CD4-positive, alpha-beta memory T cell (primary cell): ENCODE measurements at regions of chr10 and their contacts with region 1.

Region 1: GRCh38 chr10:133357285-133358151 is at the start of gene FUOM:
- DNase-seq: peak; percentile 76 to 79 (median 77)
- H3K4me3 ChIP-seq: peak within 1 kb of the TSS in 1 of 2 donors; percentile 63
- H3K4me3 Mint-ChIP-seq: peak within 1 kb of the TSS; percentile 67 to 82 (median 78)
- H3K27ac ChIP-seq: peak within 1 kb of the TSS; percentile 52
- H3K27ac Mint-ChIP-seq: peak within 1 kb of the TSS in 4 of 7 donors; percentile 43 to 62 (median 56)
- H3K4me1 ChIP-seq: peaks cover 8% of the 10 kb centered on the region
- H3K4me1 Mint-ChIP-seq: peaks cover 0 to 9% (median 5%) of the 10 kb centered on the region in 4 donors
- H3K27me3 ChIP-seq: no peaks in the 10 kb centered on the region
- H3K27me3 Mint-ChIP-seq: no peaks in the 10 kb centered on the region
- total RNA-seq, gene FUOM: 17.1 to 18.1 TPM

Region 2: DNA sequence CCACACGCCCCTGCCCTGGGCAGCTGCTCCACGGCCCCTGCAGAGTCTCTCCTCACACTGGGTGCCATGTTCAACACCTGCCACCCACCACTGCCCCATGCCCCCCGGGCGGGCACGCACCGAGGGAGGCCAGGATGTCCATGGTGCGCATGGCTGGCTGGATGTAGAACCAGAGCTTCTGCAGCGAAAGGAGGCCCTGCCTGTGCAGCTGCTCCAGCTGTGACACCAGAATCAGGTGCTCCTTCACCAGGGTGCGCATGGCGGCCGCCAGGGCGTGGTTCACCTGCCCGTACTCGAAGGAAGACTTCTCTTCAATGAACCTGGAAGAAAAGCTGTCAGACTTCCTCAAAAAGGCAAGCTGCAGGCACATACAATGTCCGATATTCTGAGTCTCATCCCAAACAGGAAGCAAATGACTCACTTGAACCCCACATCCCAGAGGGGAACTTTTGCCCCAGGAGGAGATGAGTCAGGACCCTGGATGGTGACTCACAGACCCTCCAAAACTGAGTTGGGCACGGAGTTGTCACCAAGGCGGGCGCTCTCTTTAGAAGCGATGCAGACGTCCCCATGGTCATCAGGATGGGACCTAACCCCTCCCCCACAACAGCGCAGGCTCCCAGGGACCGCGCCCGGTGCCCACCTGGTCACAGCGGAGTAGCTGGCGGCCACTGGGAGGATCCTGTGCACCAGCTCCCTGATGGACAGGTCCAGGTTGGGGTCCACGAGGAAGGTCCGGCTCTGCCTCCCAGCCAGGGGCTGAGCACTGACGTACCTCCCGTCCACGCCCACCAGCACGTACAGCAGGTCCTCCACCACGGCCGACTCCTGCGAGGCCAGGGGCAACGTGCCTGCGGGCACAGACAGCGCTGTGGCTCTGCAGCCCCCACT is 64.4 kb before region 1 on chr10:
- CTCF ChIA-PET with region 1: no interaction called
- POLR2A ChIA-PET with region 1: no interaction called
- intact Hi-C with region 1: no loop called
- DNase-seq: no peak
- H3K4me3 ChIP-seq: no peak overlapping the region
- H3K4me3 Mint-ChIP-seq: no peak overlapping the region
- H3K27ac ChIP-seq: no peak overlapping the region
- H3K27ac Mint-ChIP-seq: no peak overlapping the region
- H3K4me1 ChIP-seq: no peaks in the 10 kb centered on the region
- H3K4me1 Mint-ChIP-seq: no peaks in the 10 kb centered on the region
- H3K27me3 ChIP-seq: no peaks in the 10 kb centered on the region
- H3K27me3 Mint-ChIP-seq: no peaks in the 10 kb centered on the region

Region 3: DNA sequence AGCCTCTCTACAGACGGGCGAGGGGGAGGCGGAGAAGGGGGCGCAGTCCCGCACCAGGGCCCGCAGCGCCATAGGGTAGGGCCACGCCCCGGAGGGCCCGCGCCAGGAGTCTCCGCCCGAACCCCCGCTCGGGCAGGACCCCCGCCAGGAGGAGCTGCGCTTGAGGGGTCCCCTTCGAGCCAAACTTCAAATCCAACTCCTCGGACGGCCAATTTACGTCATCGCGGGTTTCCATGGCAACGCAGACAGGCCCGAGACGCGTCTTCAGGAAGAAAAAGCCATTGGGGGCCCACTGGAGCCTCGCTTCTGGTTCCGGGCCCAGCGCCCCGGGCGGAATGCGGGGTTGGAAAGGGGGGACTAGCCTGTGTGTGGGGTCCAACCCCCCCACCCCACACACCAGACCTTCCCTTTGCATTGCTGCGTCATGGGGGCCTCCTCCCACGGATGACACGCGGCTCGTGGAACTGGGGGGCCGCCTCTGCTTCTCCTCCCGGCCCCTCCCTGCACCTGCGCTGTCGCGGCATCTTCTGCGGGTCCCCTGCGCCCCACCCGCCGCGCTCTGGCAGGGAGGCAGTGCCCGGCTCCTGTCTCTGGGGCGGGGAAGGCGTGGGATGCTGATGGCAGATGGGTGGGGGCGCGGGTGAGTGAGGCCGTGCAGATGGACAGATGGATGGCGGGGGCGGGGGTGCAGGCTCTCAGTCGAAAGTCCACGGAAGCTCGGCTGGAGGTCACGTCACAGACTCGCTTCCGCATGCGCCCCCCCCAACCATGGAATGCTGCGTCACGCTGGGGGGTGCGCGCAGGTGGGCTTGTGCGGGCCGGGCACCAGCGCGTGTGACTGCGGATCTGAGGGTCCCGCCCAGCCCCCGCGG is 22.0 kb before region 1 on chr10:
- CTCF ChIA-PET with region 1: interaction called, 4 read pairs
- POLR2A ChIA-PET with region 1: interaction called, 12 read pairs
- intact Hi-C with region 1: loop called (anchors 2 kb)
- DNase-seq: peak; percentile 85 to 95 (median 86)
- H3K4me3 ChIP-seq: peak overlapping the region in 1 of 2 donors; percentile 57
- H3K4me3 Mint-ChIP-seq: peak overlapping the region; percentile 69 to 90 (median 78)
- H3K27ac ChIP-seq: peak overlapping the region; percentile 64
- H3K27ac Mint-ChIP-seq: peak overlapping the region in 6 of 7 donors; percentile 90 to 98 (median 94)
- H3K4me1 ChIP-seq: peaks cover 25% of the 10 kb centered on the region
- H3K4me1 Mint-ChIP-seq: peaks cover 0 to 22% (median 3%) of the 10 kb centered on the region in 4 donors
- H3K27me3 ChIP-seq: no peaks in the 10 kb centered on the region
- H3K27me3 Mint-ChIP-seq: peaks cover 0 to 1% of the 10 kb centered on the region in 2 donors

Region 4: DNA sequence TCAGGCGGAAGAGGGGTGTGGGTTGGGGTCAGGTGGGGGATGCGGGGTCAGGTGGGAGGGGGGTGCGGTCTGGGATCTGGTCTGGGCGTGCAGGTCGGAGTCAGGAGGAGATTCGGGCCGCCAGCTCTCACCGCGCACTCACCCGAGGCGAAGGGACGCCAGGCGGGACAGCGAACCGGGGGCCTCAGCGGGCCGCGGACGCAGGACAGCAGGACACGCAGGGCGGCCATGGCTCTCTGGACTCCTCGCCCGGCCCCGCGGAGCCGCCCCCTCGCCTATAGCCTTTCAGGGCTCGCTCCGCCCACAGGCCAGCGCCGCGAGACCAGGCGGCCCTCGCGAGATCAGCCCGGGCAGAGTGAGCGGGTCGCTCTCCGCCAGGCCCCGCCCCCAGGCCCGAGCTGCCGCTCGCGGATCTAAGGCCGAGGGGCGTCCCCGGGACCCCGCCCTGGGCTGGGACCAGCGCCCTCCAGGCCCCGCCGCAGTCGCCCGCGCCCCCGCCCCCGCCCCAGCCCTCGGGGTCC is 15.6 kb after region 1 on chr10 and contains the start of gene ECHS1:
- CTCF ChIA-PET with region 1: interaction called, 3 read pairs
- POLR2A ChIA-PET with region 1: interaction called, 7 read pairs
- intact Hi-C with region 1: loop called (anchors 1 kb)
- DNase-seq: peak; percentile 90 to 95 (median 91)
- H3K4me3 ChIP-seq: peak within 1 kb of the TSS in 1 of 2 donors; percentile 63
- H3K4me3 Mint-ChIP-seq: peak within 1 kb of the TSS; percentile 69 to 86 (median 82)
- H3K27ac ChIP-seq: peak within 1 kb of the TSS; percentile 51
- H3K27ac Mint-ChIP-seq: peak within 1 kb of the TSS in 6 of 7 donors; percentile 13 to 90 (median 78)
- H3K4me1 ChIP-seq: peaks cover 18% of the 10 kb centered on the region
- H3K4me1 Mint-ChIP-seq: peaks cover 2 to 24% (median 14%) of the 10 kb centered on the region in 4 donors
- H3K27me3 ChIP-seq: no peaks in the 10 kb centered on the region
- H3K27me3 Mint-ChIP-seq: no peaks in the 10 kb centered on the region
- total RNA-seq, gene ECHS1: 29.7 to 30.6 TPM